Stomach (tissue), 19 donors: ENCODE measurements at regions of chr17 and their contacts with region 1.

Region 1: DNA sequence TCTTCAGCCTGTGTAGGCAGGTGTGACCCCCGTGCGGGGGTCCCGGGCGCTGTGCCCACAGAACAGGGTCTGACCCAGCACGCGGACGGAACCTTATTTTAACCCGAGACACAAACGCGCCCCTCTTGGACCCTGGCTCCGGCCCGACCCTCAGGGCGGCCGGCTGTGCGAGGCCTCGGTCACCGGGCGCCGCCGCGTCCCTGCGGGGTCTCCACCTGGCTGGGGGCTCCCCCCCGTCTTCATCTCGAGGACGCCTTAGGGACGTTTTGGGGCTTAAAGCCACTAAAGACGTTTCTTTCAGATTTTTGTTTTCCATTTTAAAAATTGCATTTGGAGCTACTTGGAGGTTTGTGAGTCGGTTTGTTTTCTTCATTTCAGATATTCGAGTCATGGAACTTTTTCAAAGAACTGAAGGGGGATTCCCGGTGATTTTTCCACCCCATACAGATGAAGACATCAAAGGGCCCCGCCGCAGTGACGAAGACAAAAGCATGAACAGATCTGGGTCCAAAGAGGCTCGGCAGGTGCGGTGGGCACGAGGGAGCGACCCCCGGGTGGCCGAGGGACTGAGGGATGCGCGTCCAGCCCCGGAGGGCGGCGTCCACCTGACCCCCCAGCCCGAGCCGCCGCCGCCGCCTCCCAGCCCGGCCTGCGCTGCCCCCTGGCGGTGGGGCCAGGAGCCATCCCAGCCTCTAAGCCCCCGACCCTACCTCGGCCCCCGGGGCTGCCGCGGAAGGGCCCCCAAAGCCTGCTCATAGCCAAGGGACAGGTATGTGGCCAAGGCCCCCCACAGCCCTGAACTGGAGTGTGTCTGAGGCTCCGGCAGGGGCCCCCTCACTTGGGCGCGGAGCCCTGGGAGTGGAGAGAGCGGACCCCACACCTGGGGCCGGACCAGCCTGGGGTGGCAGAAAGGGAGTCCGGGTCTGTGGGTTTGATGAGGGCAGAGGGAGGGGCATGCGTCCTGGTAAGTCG is 3.8 kb upstream of the CD7 start:
- DNase-seq: no peak
- H3K4me3 ChIP-seq: peak overlapping the region in 2 of 4 donors; percentile 18 to 22
- H3K27ac ChIP-seq: no peak overlapping the region
- H3K4me1 ChIP-seq: peaks cover 6 to 27% (median 20%) of the 10 kb centered on the region in 4 donors
- H3K27me3 ChIP-seq: peaks cover 0 to 33% (median 11%) of the 10 kb centered on the region in 3 donors
- CTCF ChIP-seq: peak in 5 of 7 experiments; percentile 75 to 96 (median 86)
- EP300 ChIP-seq: no peak
- POLR2A ChIP-seq: no peak

Region 2: GRCh38 chr17:82230627-82231311 is 90.5 kb before region 1 on chr17:
- intact Hi-C with region 1: loop called (anchors 5 kb)
- DNase-seq: peak; percentile 88 to 95
- H3K4me3 ChIP-seq: peak overlapping the region; percentile 61 to 75 (median 68)
- H3K27ac ChIP-seq: peak overlapping the region; percentile 91 to 97 (median 92)
- H3K4me1 ChIP-seq: peaks cover 46 to 93% (median 68%) of the 10 kb centered on the region in 4 donors
- H3K27me3 ChIP-seq: peaks cover 0 to 4% (median 0%) of the 10 kb centered on the region in 3 donors
- CTCF ChIP-seq: peak in 5 of 7 experiments; percentile 33 to 75 (median 63)
- EP300 ChIP-seq: no peak
- POLR2A ChIP-seq: no peak